ENCODE measurements at regions of chr16 and their contacts with region 1.

Region 1: DNA sequence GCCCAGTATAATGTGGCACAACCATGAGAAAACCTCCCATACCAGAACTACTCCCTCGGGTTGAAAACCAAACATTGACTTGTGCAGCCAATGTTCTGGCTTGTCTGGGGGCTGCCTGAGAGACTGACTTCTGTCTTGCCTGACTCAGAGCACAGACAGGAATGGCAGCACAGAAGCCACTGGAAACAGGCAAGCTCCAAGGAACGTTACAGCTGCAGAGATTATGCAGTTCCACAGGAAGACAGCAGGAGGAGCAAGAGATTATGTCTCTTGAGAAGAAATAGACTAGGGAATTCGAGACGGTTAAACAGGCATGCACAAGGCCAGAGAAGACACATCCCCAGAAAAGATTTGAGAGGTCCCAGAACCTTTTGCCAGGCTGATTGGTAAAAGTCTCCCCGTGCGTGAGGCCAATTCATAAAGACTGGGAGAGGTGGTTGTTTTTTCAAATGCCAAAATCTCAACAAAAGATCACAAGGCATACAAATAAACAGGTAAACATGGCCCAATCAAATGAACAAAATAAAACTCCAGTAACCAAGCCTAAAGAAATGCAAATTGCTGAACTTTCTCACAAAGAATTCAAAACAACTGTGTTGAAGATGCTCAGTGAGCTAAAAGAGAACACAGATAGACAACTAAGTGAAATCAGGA is 90.6 kb upstream of the CDH5 start:
- DNase-seq: no peak
- H3K4me3 Mint-ChIP-seq: no peak overlapping the region
- H3K27ac Mint-ChIP-seq: no peak overlapping the region
- H3K4me1 Mint-ChIP-seq: peaks cover 5% of the 10 kb centered on the region
- H3K27me3 Mint-ChIP-seq: peaks cover 16% of the 10 kb centered on the region

Region 2: DNA sequence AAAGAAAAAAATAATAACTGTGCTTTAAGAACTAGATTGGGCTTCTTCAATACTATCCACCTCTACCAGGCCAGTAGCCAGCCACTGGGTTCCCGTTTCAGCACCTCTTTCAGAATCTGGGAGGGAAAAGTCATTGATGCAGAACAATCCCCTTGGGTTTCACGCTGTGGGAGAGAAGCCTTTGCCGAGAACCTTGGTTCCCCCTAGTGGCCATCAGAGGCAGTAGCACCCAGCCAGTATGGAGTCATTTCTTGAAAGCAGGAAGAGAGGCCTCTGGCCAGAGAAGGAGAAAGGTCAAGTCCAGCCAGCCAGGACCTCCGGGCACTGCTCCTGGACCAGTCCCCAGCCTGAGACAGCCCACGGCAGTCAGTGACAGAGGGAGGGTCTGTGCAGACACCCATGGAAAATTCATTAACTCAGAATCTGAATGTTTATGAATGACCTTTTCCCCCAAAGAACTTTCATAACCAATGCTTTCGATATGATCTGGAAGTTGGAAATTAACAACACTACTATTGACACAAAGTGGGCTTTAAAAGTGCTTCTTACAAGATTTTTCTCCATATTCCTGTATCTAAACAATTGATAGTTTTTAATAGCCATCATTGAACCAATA is 39.4 kb after region 1 on chr16:
- CTCF ChIA-PET with region 1: interaction called, 12 read pairs
- POLR2A ChIA-PET with region 1: no interaction called
- intact Hi-C with region 1: loop called (anchors 1 kb)
- DNase-seq: peak; percentile 55
- H3K4me3 Mint-ChIP-seq: no peak overlapping the region
- H3K27ac Mint-ChIP-seq: no peak overlapping the region
- H3K4me1 Mint-ChIP-seq: no peaks in the 10 kb centered on the region
- H3K27me3 Mint-ChIP-seq: peaks cover 3% of the 10 kb centered on the region

Measured in activated CD4-positive, alpha-beta memory T cell treated with anti-CD3 and anti-CD28 coated beads for 36 hours (primary cell).